ENCODE measurements at regions of chr4 and their contacts with region 1.

Region 1: GRCh38 chr4:41882625-41883347 is 52.4 kb upstream of the TMEM33 start:
- DNase-seq: peak; percentile 91
- CTCF ChIP-seq: peak; percentile 90

Region 2: DNA sequence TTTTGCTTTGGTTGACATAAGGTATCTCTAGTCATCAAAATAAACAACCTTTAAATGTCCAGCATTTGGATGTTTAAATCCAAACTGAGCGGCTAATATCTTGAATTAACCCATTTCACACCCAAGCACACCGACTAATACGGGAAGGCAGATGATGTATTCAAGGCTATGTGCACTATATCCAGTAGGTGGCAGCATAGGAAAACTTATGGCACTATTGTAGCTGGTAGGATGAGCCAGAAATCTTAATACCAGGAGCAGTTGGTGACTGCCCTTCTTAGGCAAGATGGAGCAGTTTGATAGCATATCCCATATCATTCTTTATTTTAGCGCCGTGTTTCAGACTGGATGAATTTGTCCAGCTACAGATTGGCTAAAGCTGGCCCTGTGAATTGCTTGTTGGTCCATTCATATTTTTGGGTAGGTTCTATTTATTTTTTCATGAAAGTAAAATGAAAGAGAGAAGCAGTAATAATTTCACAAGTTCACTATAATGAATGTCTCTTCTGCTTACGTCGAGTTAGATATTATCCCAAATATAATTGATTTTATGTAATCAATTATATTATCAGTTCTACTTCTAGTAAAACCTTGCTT is 601.6 kb before region 1 on chr4:
- in situ Hi-C with region 1: loop called (anchors 25 kb)
- DNase-seq: peak; percentile 80
- CTCF ChIP-seq: peak; percentile 76

Region 3: GRCh38 chr4:41683321-41683720 is 199.5 kb before region 1 on chr4:
- in situ Hi-C with region 1: loop called (anchors 10 kb)
- DNase-seq: no peak
- CTCF ChIP-seq: no peak